ENCODE measurements at regions of chr2 and their contacts with region 1.

Region 1: DNA sequence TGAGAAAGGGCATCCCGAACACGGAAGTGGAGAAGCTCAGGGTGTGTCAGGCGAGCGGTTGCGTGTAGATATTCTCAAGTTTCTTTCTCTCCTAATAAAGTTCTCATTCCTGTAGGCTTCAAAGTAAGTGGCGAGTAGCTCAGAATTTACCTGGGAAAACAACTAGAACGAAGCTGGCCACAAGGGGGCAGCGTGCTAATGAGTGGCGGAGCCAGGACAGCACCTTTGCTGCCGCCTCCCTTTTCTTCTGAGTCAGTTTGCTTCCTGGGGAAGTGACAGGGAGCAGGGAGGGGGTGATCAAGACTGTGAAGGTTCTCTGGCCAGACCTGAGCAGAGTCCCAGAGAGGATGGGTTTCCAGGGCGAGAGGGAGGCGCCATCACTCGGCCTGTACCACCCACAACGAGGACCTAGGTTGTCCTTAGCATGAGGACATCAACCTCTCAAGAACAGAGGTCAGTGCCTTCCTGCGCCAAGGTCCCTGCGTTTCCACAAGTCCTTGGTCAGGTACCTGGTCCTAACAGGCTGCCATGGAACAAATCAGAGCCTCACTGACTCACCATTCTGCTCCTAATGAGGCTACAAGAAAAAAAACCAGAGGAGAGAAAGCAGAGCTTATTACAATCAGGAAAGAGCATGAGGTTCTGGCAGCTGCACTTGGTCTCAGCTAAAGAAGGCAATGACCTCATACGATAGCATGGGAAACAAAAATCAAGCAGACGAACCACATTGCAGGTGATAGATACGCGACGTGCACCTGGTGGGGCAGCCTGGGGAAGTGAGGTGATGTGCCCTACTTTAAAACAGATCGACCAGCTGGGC is 98.6 kb downstream of the PLB1 start:
- DNase-seq: peak; percentile 89
- ATAC-seq: peak; percentile 91
- H3K4me3 Mint-ChIP-seq: peak overlapping the region; percentile 6
- H3K27ac Mint-ChIP-seq: peak overlapping the region; percentile 57
- H3K4me1 Mint-ChIP-seq: peaks cover 14% of the 10 kb centered on the region
- H3K27me3 Mint-ChIP-seq: no peaks in the 10 kb centered on the region

Region 2: DNA sequence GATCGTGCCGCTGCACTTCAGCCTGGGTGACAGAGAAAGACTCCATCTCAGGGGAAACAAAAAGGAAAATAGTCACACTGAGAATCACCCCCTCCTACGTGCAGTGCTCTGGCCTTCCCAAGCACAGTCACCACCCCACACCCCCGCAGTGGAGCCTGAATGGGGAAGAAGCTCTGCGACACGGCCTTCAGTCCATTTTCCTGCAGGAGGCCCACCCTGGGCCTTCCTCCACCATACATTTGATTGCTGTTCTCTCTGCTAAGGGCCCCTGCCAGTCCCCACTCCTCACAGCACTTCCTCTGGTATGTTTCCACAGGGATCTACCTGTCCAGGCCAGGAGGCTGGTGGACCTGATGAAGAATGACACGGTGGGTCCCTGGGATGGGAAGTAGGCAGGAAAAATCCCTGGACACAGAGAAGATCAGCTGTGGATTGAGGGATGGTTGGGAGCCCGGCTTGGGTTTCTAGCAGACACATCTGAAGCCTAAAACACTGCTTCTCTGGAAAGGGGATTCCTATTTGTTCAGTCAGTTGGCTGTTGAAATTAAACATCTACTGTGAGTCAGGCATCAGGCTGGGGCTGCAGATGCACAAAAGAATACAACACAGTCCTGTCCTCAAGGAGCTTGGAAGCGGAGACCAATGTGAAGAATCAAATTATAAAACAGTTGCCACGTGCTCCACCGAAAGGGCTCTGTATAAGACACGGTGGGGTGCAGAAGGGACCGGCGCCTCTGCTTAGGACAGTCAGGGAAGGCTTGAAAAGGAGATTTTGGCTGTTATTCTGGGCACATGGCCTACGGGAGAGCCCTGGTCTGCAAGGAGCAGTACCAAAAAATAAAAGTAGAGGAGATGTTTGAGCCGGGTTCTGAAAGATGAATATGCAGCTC is 16.5 kb before region 1 on chr2:
- CTCF ChIA-PET with region 1: interaction called, 44 read pairs
- DNase-seq: no peak
- ATAC-seq: no peak
- H3K4me3 Mint-ChIP-seq: no peak overlapping the region
- H3K27ac Mint-ChIP-seq: no peak overlapping the region
- H3K4me1 Mint-ChIP-seq: no peaks in the 10 kb centered on the region
- H3K27me3 Mint-ChIP-seq: peaks cover 2% of the 10 kb centered on the region

Region 3: DNA sequence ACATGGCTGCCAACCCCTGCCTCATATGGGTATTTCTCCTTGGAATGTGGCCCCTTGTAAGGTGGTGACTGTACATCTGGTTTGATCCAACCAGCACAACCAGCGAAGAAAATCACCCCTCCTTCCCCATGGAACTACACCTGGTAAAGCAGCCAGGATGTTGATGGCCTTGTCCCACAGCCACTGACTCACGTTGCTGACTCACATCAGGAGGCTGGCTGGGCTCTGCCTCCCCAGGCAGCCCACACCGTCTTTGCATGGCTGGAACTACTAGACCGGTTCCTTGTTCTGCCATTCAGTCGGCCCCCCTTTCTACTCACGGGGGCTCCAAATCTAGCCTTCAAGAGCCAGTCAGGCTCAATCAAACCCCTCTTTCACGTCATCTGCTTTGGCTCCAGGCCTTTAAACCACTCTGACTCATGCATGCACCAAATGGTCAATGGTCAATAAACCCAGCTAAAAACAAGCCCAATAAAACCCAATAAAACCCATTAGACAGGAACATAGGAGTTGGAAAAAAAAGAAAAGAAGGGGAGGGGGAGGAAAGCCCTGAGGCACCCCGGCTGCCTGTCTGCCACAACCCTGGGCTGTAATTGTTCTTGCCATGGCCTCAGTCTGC is 16.2 kb after region 1 on chr2:
- CTCF ChIA-PET with region 1: interaction called, 107 read pairs
- DNase-seq: peak; percentile 72
- ATAC-seq: peak; percentile 63
- H3K4me3 Mint-ChIP-seq: no peak overlapping the region
- H3K27ac Mint-ChIP-seq: peak overlapping the region; percentile 50
- H3K4me1 Mint-ChIP-seq: peaks cover 24% of the 10 kb centered on the region
- H3K27me3 Mint-ChIP-seq: no peaks in the 10 kb centered on the region

Region 4: DNA sequence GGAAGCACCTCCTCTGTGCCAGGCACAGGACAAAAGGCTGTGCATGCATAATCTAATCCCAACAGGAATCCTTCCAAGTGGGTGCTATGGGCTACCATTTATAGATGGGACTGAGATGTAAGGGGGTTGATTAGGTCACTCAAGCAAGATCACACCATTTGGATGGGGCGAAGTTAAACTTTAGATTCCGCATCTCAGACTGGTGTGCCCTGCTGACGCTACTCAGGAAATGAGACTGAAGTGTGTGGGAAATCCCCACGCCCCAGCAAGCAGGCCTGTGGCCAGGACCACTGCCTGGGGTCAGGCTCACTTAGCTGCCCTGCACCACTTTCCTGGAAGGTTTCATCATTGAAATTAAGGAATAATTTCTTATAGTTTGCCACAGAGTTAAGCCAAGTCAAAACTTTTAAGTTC is 86.7 kb after region 1 on chr2:
- CTCF ChIA-PET with region 1: interaction called, 14 read pairs
- DNase-seq: peak; percentile 84
- ATAC-seq: peak; percentile 97
- H3K4me3 Mint-ChIP-seq: no peak overlapping the region
- H3K27ac Mint-ChIP-seq: peak overlapping the region; percentile 86
- H3K4me1 Mint-ChIP-seq: peaks cover 40% of the 10 kb centered on the region
- H3K27me3 Mint-ChIP-seq: no peaks in the 10 kb centered on the region

Region 5: GRCh38 chr2:28761420-28761819 is 166.9 kb after region 1 on chr2:
- CTCF ChIA-PET with region 1: interaction called, 142 read pairs
- DNase-seq: no peak
- ATAC-seq: no peak
- H3K4me3 Mint-ChIP-seq: no peak overlapping the region
- H3K27ac Mint-ChIP-seq: no peak overlapping the region
- H3K4me1 Mint-ChIP-seq: peaks cover 32% of the 10 kb centered on the region
- H3K27me3 Mint-ChIP-seq: no peaks in the 10 kb centered on the region

Region 6: DNA sequence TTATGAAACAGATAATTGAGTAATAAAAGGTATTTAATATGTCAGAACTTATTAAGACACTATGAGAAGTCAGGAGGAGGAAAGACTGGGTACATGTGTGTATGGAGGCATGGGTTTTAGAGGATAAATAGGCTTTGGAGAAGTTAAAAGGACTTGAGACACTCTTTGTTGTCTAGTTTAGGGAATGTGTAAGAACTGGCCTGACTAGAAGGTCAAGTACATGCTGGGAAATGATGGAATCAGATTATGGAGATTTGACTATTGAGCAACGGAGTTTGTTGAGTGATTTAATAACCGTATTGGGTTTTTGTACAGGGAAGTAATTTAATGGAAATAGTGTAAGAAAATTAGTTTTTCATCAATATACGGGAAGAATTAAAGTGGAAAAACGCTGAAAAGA is 187.9 kb after region 1 on chr2:
- CTCF ChIA-PET with region 1: interaction called, 28 read pairs
- DNase-seq: no peak
- ATAC-seq: no peak
- H3K4me3 Mint-ChIP-seq: no peak overlapping the region
- H3K27ac Mint-ChIP-seq: no peak overlapping the region
- H3K4me1 Mint-ChIP-seq: peaks cover 10% of the 10 kb centered on the region
- H3K27me3 Mint-ChIP-seq: no peaks in the 10 kb centered on the region

Region 7: GRCh38 chr2:28870146-28870891 is 275.8 kb after region 1 on chr2 and contains the start of gene TRMT61B:
- CTCF ChIA-PET with region 1: interaction called, 11 read pairs
- DNase-seq: peak; percentile 98
- ATAC-seq: peak; percentile 99
- H3K4me3 Mint-ChIP-seq: peak within 1 kb of the TSS; percentile 95
- H3K27ac Mint-ChIP-seq: peak within 1 kb of the TSS; percentile 98
- H3K4me1 Mint-ChIP-seq: peaks cover 26% of the 10 kb centered on the region
- H3K27me3 Mint-ChIP-seq: peaks cover 7% of the 10 kb centered on the region
- total RNA-seq, gene TRMT61B: 17.4 to 18.8 TPM

Measured in activated CD8-positive, alpha-beta memory T cell treated with anti-CD3 and anti-CD28 coated beads, Interleukin-2, amount 10 ng/mL, durations not matched to agents 7 days and 5 days (primary cell).